Activated naive CD4-positive, alpha-beta T cell treated with anti-CD3 and anti-CD28 coated beads for 36 hours (primary cell): ENCODE measurements at regions of chr5 and their contacts with region 1.

Region 1: GRCh38 chr5:141320225-141321169 is at the start of gene TAF7:
- DNase-seq: peak; percentile 95
- H3K4me3 Mint-ChIP-seq: peak within 1 kb of the TSS; percentile 97
- H3K27ac Mint-ChIP-seq: peak within 1 kb of the TSS; percentile 99
- H3K4me1 Mint-ChIP-seq: peaks cover 25% of the 10 kb centered on the region
- H3K27me3 Mint-ChIP-seq: no peaks in the 10 kb centered on the region
- total RNA-seq, gene TAF7: 57.0 to 57.9 TPM

Region 2: DNA sequence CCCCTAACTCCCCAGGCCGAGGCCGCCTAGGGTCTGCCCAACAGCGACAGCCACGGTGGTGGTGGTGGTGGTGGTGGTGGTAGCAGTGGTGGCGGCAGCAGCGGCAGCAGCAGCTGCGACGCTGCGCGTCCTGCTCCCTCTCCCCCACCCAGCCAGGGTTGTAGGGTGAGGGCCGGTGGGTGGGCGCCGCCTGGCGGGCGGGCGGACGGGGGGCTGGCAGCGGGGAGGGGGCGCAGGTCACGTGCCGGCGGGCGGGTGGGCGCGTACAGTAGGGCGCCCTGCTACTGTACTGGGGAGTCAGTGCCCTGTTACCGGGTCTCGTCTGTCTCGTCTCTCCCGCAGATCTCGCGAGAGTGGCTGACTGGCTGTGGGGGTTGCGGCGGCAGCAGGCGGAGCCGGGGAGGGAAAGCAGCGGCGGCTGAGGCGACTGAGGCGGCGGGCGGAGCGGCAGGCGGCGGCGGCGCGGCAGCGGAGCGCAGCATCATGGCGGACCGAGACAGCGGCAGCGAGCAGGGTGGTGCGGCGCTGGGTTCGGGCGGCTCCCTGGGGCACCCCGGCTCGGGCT is 1206.7 kb before region 1 on chr5 and contains the start of gene PURA:
- CTCF ChIA-PET with region 1: no interaction called
- intact Hi-C with region 1: loop called (anchors 5 kb)
- DNase-seq: peak; percentile 98
- H3K4me3 Mint-ChIP-seq: peak within 1 kb of the TSS; percentile 91
- H3K27ac Mint-ChIP-seq: peak within 1 kb of the TSS; percentile 90
- H3K4me1 Mint-ChIP-seq: peaks cover 66% of the 10 kb centered on the region
- H3K27me3 Mint-ChIP-seq: no peaks in the 10 kb centered on the region
- total RNA-seq, gene PURA: 9.0 to 10.3 TPM

Region 3: GRCh38 chr5:141084487-141084990 is 236.0 kb before region 1 on chr5:
- CTCF ChIA-PET with region 1: interaction called, 3 read pairs
- intact Hi-C with region 1: loop called (anchors 10 kb)
- DNase-seq: peak; percentile 77
- H3K4me3 Mint-ChIP-seq: peak overlapping the region; percentile 85
- H3K27ac Mint-ChIP-seq: no peak overlapping the region
- H3K4me1 Mint-ChIP-seq: peaks cover 6% of the 10 kb centered on the region
- H3K27me3 Mint-ChIP-seq: peaks cover 23% of the 10 kb centered on the region

Region 4: DNA sequence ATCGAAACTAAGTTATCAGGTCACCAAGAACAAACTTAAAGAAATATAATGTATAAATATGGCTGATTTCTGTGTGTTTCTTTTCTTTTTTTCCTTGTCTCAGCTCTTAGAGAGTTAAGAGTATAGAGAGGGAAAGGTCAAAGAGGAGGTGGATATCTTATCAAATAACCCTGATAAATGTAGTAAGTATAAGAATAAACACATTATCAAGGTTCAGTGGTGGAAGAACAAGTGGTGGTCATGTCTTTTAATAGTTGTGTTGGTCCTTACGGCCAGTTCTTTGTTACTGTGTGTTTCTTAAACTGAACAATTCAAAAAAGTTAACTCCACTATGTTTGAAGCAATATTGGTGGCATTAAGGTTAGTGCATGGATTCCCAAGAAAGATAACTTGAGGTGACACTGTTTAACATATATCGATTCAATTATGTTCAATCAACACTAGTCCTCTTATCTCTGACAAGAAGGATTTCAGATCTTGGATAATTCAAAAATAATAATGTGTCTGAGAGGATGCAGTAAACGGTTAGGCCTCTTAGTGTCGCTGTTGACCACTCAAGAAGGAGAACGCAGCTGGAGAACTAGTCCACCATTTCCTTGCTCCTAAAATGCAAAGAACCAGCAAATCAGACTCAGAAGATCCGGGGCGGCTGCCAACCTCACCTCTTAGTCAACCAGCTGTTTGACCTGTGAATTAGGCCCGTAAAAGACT is 22.9 kb after region 1 on chr5 and contains the start of gene PCDHGA3:
- CTCF ChIA-PET with region 1: interaction called, 7 read pairs
- intact Hi-C with region 1: loop called (anchors 2 kb)
- DNase-seq: peak; percentile 38
- H3K4me3 Mint-ChIP-seq: peak within 1 kb of the TSS; percentile 11
- H3K27ac Mint-ChIP-seq: no peak within 1 kb of the TSS
- H3K4me1 Mint-ChIP-seq: no peaks in the 10 kb centered on the region
- H3K27me3 Mint-ChIP-seq: peaks cover 56% of the 10 kb centered on the region
- total RNA-seq, gene PCDHGA3: not detected

Region 5: GRCh38 chr5:141412854-141413539 is 92.5 kb after region 1 on chr5 and contains the start of gene PCDHGA10:
- CTCF ChIA-PET with region 1: interaction called, 8 read pairs
- intact Hi-C with region 1: loop called (anchors 2 kb)
- DNase-seq: peak; percentile 73
- H3K4me3 Mint-ChIP-seq: peak within 1 kb of the TSS; percentile 78
- H3K27ac Mint-ChIP-seq: no peak within 1 kb of the TSS
- H3K4me1 Mint-ChIP-seq: peaks cover 16% of the 10 kb centered on the region
- H3K27me3 Mint-ChIP-seq: peaks cover 69% of the 10 kb centered on the region
- total RNA-seq, gene PCDHGA10: 0.05 TPM in 1 of 2 experiments, not detected in the other

Region 6: GRCh38 chr5:141605523-141606277 is 285.2 kb after region 1 on chr5:
- CTCF ChIA-PET with region 1: no interaction called
- intact Hi-C with region 1: loop called (anchors 1 kb)
- DNase-seq: peak; percentile 83
- H3K4me3 Mint-ChIP-seq: peak overlapping the region; percentile 32
- H3K27ac Mint-ChIP-seq: peak overlapping the region; percentile 90
- H3K4me1 Mint-ChIP-seq: peaks cover 87% of the 10 kb centered on the region
- H3K27me3 Mint-ChIP-seq: no peaks in the 10 kb centered on the region

Region 7: GRCh38 chr5:141650851-141651727 is 330.6 kb after region 1 on chr5 and contains the start of gene FCHSD1:
- CTCF ChIA-PET with region 1: no interaction called
- intact Hi-C with region 1: no loop called
- DNase-seq: peak; percentile 86
- H3K4me3 Mint-ChIP-seq: peak within 1 kb of the TSS; percentile 89
- H3K27ac Mint-ChIP-seq: peak within 1 kb of the TSS; percentile 84
- H3K4me1 Mint-ChIP-seq: peaks cover 18% of the 10 kb centered on the region
- H3K27me3 Mint-ChIP-seq: no peaks in the 10 kb centered on the region
- total RNA-seq, gene FCHSD1: 28.9 to 29.6 TPM